Caco-2 (cell line): ENCODE measurements at regions of chr2 and their contacts with region 1.

Region 1: GRCh38 chr2:230068016-230068650 is 591 bp downstream of the SLC16A14 start:
- DNase-seq: peak; percentile 35
- H3K4me3 ChIP-seq: peak overlapping the region; percentile 39
- H3K4me3 Mint-ChIP-seq: peak overlapping the region; percentile 77
- H3K27ac Mint-ChIP-seq: no peak overlapping the region
- H3K4me1 ChIP-seq: no peaks in the 10 kb centered on the region
- H3K4me1 Mint-ChIP-seq: no peaks in the 10 kb centered on the region
- H3K27me3 ChIP-seq: no peaks in the 10 kb centered on the region
- H3K27me3 Mint-ChIP-seq: peaks cover 12% of the 10 kb centered on the region
- CTCF ChIP-seq: peak in 1 of 2 experiments; percentile 6

Region 2: GRCh38 chr2:230007931-230008707 is 60.0 kb before region 1 on chr2:
- CTCF ChIA-PET with region 1: interaction called, 4 read pairs
- POLR2A ChIA-PET with region 1: no interaction called
- intact Hi-C with region 1: loop called (anchors 1 kb)
- DNase-seq: peak; percentile 60 to 66
- H3K4me3 ChIP-seq: no peak overlapping the region
- H3K4me3 Mint-ChIP-seq: no peak overlapping the region
- H3K27ac Mint-ChIP-seq: no peak overlapping the region
- H3K4me1 ChIP-seq: no peaks in the 10 kb centered on the region
- H3K4me1 Mint-ChIP-seq: no peaks in the 10 kb centered on the region
- H3K27me3 ChIP-seq: no peaks in the 10 kb centered on the region
- H3K27me3 Mint-ChIP-seq: no peaks in the 10 kb centered on the region
- CTCF ChIP-seq: peak; percentile 60 to 61

Region 3: DNA sequence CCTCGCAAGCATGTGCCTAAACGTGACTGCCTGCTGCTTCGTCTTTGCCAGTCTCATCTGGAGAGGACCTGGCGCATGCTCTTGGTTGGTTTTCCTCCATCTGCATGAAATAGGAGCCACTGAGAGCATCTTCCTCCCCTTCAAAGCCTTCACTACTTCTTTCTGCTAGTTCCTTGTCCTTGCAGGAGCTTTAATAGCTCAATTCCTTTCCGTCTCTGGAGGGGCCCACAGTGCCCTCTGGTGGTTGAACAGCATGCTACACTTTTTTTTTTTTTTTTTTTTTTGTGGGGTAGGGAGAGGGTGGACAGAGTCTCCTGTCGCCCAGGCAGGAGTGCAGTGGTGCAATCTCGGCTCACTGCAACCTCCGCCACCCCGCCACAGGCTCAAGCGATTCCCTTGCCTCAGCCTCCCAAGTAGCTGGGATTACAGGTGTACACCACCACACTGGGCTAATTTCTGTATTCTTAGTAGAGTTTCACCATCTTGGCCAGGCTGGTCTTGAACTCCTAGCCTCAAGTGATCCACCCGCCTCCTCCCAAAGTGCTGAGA is 92.1 kb after region 1 on chr2:
- CTCF ChIA-PET with region 1: interaction called, 18 read pairs
- POLR2A ChIA-PET with region 1: no interaction called
- intact Hi-C with region 1: no loop called
- DNase-seq: peak in 1 of 2 experiments; percentile 10
- H3K4me3 ChIP-seq: no peak overlapping the region
- H3K4me3 Mint-ChIP-seq: no peak overlapping the region
- H3K27ac Mint-ChIP-seq: no peak overlapping the region
- H3K4me1 ChIP-seq: no peaks in the 10 kb centered on the region
- H3K4me1 Mint-ChIP-seq: no peaks in the 10 kb centered on the region
- H3K27me3 ChIP-seq: no peaks in the 10 kb centered on the region
- H3K27me3 Mint-ChIP-seq: no peaks in the 10 kb centered on the region
- CTCF ChIP-seq: peak; percentile 42 to 48

Region 4: DNA sequence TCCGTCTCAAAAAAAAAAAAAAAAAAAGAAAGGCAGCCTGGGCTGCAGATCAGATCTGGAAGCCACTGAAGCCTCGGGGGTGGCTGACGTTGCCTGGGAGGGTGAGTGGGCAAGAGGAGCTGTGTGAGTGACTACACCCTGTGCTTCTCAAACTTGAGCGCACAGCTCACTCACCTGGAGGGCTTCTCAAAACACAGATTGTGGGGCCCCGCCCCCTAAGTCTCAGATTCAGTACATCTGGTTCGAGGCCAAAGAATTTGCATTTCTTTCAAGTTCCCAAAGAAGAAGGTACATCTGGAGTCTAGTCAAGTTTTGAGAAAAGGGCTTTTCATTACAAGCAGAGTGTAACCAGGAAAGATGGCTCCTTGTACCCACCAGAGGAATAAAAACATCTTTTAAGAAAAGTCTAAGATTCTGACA is 546.8 kb after region 1 on chr2:
- CTCF ChIA-PET with region 1: no interaction called
- POLR2A ChIA-PET with region 1: no interaction called
- intact Hi-C with region 1: loop called (anchors 5 kb)
- DNase-seq: no peak
- H3K4me3 ChIP-seq: no peak overlapping the region
- H3K4me3 Mint-ChIP-seq: no peak overlapping the region
- H3K27ac Mint-ChIP-seq: no peak overlapping the region
- H3K4me1 ChIP-seq: no peaks in the 10 kb centered on the region
- H3K4me1 Mint-ChIP-seq: no peaks in the 10 kb centered on the region
- H3K27me3 ChIP-seq: no peaks in the 10 kb centered on the region
- H3K27me3 Mint-ChIP-seq: peaks cover 6% of the 10 kb centered on the region
- CTCF ChIP-seq: no peak